Prostate gland (tissue), 2 donors: ENCODE measurements at regions of chr10 and their contacts with region 1.

Region 1: GRCh38 chr10:24952707-24953645 is 570 bp upstream of the PRTFDC1 start:
- DNase-seq: peak; percentile 12
- H3K4me3 ChIP-seq: peak overlapping the region; percentile 48 to 54
- H3K27ac ChIP-seq: peak overlapping the region; percentile 69 to 70
- H3K4me1 ChIP-seq: no peaks in the 10 kb centered on the region
- H3K27me3 ChIP-seq: no peaks in the 10 kb centered on the region
- CTCF ChIP-seq: peak in 2 of 4 experiments; percentile 21 to 50
- POLR2A ChIP-seq: no peak

Region 2: DNA sequence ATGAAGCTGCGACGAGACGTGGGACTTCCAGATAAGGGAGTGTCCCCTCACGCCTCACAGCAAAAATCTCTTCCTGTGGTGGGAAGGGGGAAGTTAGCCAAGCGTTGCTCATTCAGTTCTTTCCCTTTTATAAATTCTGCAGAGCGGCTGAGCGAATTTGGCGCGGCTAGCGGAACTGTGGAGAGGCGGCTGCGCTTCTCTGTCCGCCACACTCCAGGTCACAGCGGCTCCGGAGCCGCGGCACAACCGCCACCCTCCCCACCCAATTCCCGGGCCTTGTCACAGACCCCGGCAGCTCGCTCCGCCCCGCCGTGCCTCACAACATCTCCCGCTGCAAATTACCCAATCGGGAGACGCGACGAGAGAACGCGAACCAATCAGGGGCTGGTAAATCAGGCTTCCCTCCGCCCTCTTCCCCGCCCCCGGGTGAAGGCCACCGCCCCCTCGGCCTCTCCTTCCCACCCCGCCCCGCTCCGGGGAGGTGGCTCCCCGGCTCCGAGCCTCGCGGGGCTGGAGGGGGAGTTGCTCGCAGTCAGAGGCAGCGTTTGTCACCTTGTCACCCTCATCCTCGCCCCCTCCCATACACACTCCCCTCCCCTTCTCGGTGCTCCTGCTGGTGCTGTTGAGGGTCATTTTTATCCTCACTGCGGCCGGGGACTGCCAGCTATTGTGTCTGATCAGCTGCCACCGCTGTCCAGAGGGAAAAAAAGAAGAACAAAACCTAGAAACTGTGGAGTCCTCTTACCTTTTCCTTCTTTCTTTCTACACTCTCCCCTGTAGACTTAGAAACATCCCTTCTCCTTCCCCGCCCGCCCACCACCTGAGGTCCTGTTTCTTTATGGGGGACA is 228.4 kb before region 1 on chr10:
- intact Hi-C with region 1: loop called (anchors 5 kb)
- DNase-seq: peak; percentile 99
- H3K4me3 ChIP-seq: peak overlapping the region; percentile 68 to 73
- H3K27ac ChIP-seq: peak overlapping the region; percentile 93 to 96
- H3K4me1 ChIP-seq: no peaks in the 10 kb centered on the region
- H3K27me3 ChIP-seq: no peaks in the 10 kb centered on the region
- CTCF ChIP-seq: peak in 1 of 4 experiments; percentile 3
- POLR2A ChIP-seq: peak; percentile 97

Region 3: DNA sequence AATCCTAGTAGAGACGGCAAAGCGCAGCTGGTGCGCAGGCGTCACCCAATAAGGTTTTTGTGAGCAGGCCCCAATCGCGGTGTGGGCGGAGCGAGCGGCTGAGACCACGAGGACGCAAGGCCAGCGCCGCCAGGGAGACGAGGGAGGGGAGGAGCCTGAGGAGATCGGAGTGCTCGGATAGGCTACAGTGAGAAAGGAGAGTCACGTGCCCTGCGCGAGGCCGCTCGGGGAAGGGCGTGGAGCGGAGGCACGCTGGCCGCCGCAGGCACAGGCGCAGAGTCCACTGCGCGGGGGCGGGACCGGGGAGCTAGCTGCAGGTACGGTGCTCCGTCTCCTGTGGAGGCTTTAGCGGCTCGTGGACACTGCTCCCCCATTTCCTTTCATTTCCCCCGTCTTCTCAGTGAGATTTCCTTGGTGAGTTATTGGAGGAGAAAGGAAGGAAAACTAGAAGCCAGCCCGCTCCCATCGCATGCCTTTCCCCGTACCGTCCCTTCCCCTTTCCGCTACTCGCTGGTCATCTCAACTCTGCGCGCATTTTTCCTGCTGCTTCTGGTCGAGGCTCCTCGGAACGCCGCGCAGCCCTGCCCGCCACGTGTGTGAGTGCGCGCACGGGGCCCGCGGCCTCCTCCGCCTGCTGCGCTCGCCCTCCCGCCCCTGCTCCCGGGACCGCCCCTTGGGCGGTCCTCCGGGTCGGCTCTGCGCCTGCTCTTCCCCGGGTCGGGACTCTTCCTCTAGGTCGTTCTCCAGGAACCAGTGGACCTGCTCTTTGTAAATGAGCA is 63.6 kb after region 1 on chr10 and contains the start of gene THNSL1:
- intact Hi-C with region 1: loop called (anchors 5 kb)
- DNase-seq: peak; percentile 98
- H3K4me3 ChIP-seq: peak within 1 kb of the TSS; percentile 52 to 57
- H3K27ac ChIP-seq: peak within 1 kb of the TSS; percentile 86 to 89
- H3K4me1 ChIP-seq: no peaks in the 10 kb centered on the region
- H3K27me3 ChIP-seq: no peaks in the 10 kb centered on the region
- CTCF ChIP-seq: peak in 2 of 4 experiments; percentile 2 to 6
- POLR2A ChIP-seq: peak; percentile 68
- total RNA-seq, gene THNSL1: 2.4 to 4.3 TPM

Region 4: GRCh38 chr10:25047591-25048301 is 94.8 kb after region 1 on chr10:
- intact Hi-C with region 1: no loop called
- DNase-seq: no peak
- H3K4me3 ChIP-seq: no peak overlapping the region
- H3K27ac ChIP-seq: no peak overlapping the region
- H3K4me1 ChIP-seq: no peaks in the 10 kb centered on the region
- H3K27me3 ChIP-seq: peaks cover 2% of the 10 kb centered on the region
- CTCF ChIP-seq: no peak
- POLR2A ChIP-seq: no peak